Activated B cell treated with CpG ODN at 0.5 μM for 24 hours (primary cell): ENCODE measurements at regions of chr7 and their contacts with region 1.

Region 1: DNA sequence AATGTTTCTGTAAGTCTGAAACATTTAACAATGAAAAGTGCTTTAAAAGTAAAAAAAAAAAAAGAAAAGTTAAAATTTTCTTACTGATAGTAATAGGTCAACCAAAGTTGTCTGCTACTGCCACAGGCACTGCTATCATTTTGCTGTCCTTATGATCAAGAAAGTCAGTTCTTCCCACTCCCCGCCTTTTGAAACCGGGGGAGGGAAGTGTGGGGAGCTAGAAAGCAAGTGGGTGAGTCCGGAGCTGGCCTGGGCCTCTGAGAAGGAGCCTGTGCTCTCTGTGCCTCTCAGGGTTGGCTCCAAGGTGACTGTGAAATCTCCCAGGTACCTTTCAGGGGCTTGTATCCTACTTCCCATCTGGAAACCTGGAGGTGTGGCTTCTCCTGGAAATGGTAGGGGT is 7.3 kb downstream of the C7orf57 start:
- DNase-seq: no peak
- ATAC-seq: no peak
- H3K4me3 Mint-ChIP-seq: no peak overlapping the region
- H3K27ac Mint-ChIP-seq: no peak overlapping the region
- H3K4me1 Mint-ChIP-seq: peaks cover 4% of the 10 kb centered on the region
- H3K27me3 Mint-ChIP-seq: peaks cover 2% of the 10 kb centered on the region
- CTCF ChIP-seq: no peak

Region 2: GRCh38 chr7:47474937-47475878 is 567.4 kb before region 1 on chr7:
- CTCF ChIA-PET with region 1: no interaction called
- POLR2A ChIA-PET with region 1: no interaction called
- intact Hi-C with region 1: no loop called
- DNase-seq: peak; percentile 50
- ATAC-seq: peak; percentile 97
- H3K4me3 Mint-ChIP-seq: no peak overlapping the region
- H3K27ac Mint-ChIP-seq: no peak overlapping the region
- H3K4me1 Mint-ChIP-seq: peaks cover 31% of the 10 kb centered on the region
- H3K27me3 Mint-ChIP-seq: no peaks in the 10 kb centered on the region
- CTCF ChIP-seq: no peak

Region 3: DNA sequence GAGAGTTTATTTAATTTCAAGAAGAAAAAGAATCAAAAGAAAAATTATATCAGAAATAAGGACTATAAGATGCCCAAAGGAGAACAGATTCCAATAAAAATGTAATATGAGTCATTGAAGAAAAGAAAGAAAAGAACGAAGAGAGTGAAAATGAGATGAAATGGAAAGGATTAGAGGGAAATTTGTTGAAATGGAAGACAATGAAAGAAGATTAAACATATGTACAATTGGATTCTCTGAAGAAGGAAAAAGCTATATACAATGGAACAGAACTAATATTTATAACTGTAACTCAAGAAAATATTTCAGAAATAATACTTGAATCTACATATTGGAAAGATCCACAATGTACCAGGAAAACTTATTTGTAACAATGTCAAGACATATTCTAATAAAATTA is 21.3 kb after region 1 on chr7:
- CTCF ChIA-PET with region 1: no interaction called
- POLR2A ChIA-PET with region 1: no interaction called
- intact Hi-C with region 1: loop called (anchors 1 kb)
- DNase-seq: no peak
- ATAC-seq: no peak
- H3K4me3 Mint-ChIP-seq: no peak overlapping the region
- H3K27ac Mint-ChIP-seq: no peak overlapping the region
- H3K4me1 Mint-ChIP-seq: peaks cover 2% of the 10 kb centered on the region
- H3K27me3 Mint-ChIP-seq: peaks cover 19% of the 10 kb centered on the region
- CTCF ChIP-seq: no peak

Region 4: DNA sequence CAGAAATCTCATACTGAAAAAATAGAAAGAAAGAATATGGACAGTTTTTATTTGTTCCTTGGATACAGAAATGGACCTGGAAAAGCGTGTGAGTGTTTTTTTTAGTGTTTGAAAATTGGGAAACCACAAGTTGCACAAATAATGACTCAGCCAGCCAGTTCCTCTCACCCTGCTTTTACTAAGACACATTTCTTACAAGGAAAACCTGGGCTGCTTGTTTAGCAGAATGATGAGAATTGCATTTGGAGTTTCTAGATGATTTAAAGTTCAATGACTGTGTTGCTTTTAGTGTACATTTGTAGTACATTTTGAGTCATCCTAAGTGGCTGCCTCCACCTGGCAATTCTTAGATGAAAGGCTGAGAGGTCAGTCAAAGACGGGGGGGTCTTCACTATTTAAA is 347.3 kb after region 1 on chr7:
- CTCF ChIA-PET with region 1: no interaction called
- POLR2A ChIA-PET with region 1: no interaction called
- intact Hi-C with region 1: no loop called
- DNase-seq: no peak
- ATAC-seq: no peak
- H3K4me3 Mint-ChIP-seq: no peak overlapping the region
- H3K27ac Mint-ChIP-seq: no peak overlapping the region
- H3K4me1 Mint-ChIP-seq: no peaks in the 10 kb centered on the region
- H3K27me3 Mint-ChIP-seq: no peaks in the 10 kb centered on the region
- CTCF ChIP-seq: no peak